ENCODE measurements at regions of chr6 and their contacts with region 1.

Region 1: DNA sequence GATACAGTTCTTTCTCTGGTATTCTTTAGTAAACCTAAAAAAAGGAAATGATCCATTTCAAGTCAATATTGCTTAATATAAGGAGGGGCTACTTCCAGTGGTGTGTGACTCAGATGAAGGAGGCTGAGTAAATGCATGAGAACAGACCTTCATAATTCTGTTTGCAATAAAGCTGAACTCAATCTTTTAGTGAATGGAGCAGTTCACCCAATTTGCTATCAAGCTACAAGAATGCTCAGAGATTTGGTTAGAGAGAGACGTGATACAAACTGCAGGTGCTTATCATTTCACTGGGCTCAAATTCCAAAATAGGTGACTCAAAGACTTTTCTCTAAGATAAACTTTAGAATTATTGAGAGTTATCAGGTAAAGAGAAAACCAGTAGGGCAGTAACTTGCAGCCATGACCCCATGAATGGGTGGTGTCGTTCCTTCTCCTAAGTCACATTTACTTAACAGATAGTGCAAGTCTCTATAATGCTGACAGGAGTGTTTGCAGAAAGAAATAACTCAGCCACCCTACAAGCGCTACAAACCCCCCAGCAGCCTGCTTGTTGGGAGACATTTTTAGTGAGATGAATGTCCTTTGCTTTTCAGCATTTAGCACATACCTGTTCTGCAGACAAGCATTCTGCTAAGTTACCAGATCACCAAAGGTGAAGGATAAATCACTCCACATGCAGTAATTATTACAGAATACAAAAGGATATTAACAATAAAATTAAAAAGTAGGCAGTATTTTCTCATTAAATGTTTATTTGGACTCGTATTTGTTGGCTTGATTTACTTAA is 16.4 kb upstream of the BLOC1S5 start:
- DNase-seq: peak; percentile 61 to 81
- H3K4me3 ChIP-seq: no peak overlapping the region
- H3K4me3 Mint-ChIP-seq: peak overlapping the region; percentile 30
- H3K27ac Mint-ChIP-seq: peak overlapping the region; percentile 32
- H3K4me1 ChIP-seq: peaks cover 71% of the 10 kb centered on the region
- H3K4me1 Mint-ChIP-seq: peaks cover 47% of the 10 kb centered on the region
- H3K27me3 ChIP-seq: no peaks in the 10 kb centered on the region
- H3K27me3 Mint-ChIP-seq: no peaks in the 10 kb centered on the region
- CTCF ChIP-seq: no peak

Region 2: DNA sequence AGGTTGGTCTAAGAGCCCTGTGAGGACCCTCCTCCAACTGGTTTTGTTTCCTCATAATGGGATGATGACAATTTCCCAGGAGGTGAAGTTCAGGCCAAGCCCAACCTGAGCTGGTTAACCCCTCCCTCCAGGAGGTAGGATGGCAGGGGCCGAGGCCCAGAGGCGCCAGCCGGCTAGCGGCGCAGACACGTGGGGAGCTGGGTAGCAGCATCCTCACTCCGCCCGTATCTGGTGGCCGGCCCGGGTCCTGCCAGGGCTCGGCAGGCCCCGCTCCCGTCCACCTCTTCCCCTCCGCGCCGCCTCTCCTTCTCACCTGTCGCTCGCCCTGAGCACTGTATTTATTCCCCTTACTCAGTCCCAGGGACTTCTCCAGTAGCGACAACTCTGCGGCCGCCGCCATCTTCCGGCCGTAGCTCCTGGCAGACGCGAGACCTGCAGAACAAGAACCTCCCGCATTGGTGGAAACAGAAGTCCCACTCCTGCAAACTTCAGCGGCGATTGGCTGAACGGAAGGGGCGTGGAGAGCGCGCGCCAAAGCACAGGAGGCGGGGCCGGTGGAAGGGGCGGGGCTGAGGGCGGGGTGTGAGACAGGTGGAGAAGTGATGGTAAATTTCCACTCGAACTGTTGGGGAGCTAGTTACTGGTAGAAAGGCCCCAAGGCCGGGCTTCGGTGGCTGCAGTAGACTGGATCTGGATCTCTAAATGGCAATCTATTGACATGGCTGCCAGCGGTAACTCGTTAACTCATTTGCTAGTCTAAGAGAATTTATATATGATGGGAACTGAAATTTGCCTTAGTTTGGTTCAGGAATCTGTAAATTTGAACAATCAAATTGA is 21.8 kb after region 1 on chr6 and contains the start of gene EEF1E1:
- CTCF ChIA-PET with region 1: no interaction called
- POLR2A ChIA-PET with region 1: interaction called, 11 read pairs
- intact Hi-C with region 1: loop called (anchors 1 kb)
- DNase-seq: peak; percentile 94 to 98
- H3K4me3 ChIP-seq: peak within 1 kb of the TSS; percentile 80
- H3K4me3 Mint-ChIP-seq: peak within 1 kb of the TSS; percentile 88
- H3K27ac Mint-ChIP-seq: peak within 1 kb of the TSS; percentile 89
- H3K4me1 ChIP-seq: peaks cover 8% of the 10 kb centered on the region; the same call in 1 of the 2 replicates
- H3K4me1 Mint-ChIP-seq: no peaks in the 10 kb centered on the region
- H3K27me3 ChIP-seq: no peaks in the 10 kb centered on the region
- H3K27me3 Mint-ChIP-seq: no peaks in the 10 kb centered on the region
- CTCF ChIP-seq: no peak
- total RNA-seq, gene EEF1E1: 60.3 TPM in 2 replicates

Region 3: DNA sequence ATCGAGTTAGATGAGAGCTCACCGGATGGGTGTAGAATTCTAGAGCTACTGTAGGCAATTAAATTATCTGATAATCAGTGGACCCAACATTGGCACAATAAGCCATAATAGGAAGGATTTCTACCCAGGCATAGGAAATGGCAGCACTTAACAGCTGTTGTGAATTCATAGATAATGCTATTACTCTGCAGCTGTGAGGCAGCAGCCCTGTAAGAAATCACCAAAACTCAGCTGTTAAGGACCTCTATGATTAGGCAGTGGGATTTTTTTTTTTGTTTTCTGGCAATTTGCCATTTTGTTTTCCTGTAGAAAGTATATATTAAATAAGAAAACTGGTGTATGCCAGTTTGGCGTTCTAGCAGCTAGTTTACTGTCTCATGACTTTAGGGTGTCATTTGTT is 963.9 kb after region 1 on chr6:
- CTCF ChIA-PET with region 1: no interaction called
- POLR2A ChIA-PET with region 1: no interaction called
- intact Hi-C with region 1: no loop called
- DNase-seq: no peak
- H3K4me3 ChIP-seq: no peak overlapping the region
- H3K4me3 Mint-ChIP-seq: no peak overlapping the region
- H3K27ac Mint-ChIP-seq: no peak overlapping the region
- H3K4me1 ChIP-seq: no peaks in the 10 kb centered on the region
- H3K4me1 Mint-ChIP-seq: no peaks in the 10 kb centered on the region
- H3K27me3 ChIP-seq: no peaks in the 10 kb centered on the region
- H3K27me3 Mint-ChIP-seq: no peaks in the 10 kb centered on the region
- CTCF ChIP-seq: no peak